ENCODE measurements at regions of chr2 and their contacts with region 1.

Region 1: GRCh38 chr2:187499941-187500532 is 52.0 kb upstream of the CALCRL start:
- H3K4me3 ChIP-seq: no peak overlapping the region
- H3K27ac ChIP-seq: no peak overlapping the region
- H3K4me1 ChIP-seq: peaks cover 14% of the 10 kb centered on the region
- CTCF ChIP-seq: peak; percentile 65; the same call in 1 of the 2 replicates

Region 2: GRCh38 chr2:187482796-187483195 is 17.2 kb before region 1 on chr2:
- CTCF ChIA-PET with region 1: interaction called, 10 read pairs
- POLR2A ChIA-PET with region 1: no interaction called
- H3K4me3 ChIP-seq: no peak overlapping the region
- H3K27ac ChIP-seq: no peak overlapping the region
- H3K4me1 ChIP-seq: no peaks in the 10 kb centered on the region
- CTCF ChIP-seq: no peak

Region 3: GRCh38 chr2:187567126-187567525 is 67.1 kb after region 1 on chr2:
- CTCF ChIA-PET with region 1: interaction called, 14 read pairs
- POLR2A ChIA-PET with region 1: no interaction called
- H3K4me3 ChIP-seq: no peak overlapping the region
- H3K27ac ChIP-seq: no peak overlapping the region
- H3K4me1 ChIP-seq: peaks cover 8% of the 10 kb centered on the region; the same call in 1 of the 2 replicates
- CTCF ChIP-seq: no peak

Region 4: DNA sequence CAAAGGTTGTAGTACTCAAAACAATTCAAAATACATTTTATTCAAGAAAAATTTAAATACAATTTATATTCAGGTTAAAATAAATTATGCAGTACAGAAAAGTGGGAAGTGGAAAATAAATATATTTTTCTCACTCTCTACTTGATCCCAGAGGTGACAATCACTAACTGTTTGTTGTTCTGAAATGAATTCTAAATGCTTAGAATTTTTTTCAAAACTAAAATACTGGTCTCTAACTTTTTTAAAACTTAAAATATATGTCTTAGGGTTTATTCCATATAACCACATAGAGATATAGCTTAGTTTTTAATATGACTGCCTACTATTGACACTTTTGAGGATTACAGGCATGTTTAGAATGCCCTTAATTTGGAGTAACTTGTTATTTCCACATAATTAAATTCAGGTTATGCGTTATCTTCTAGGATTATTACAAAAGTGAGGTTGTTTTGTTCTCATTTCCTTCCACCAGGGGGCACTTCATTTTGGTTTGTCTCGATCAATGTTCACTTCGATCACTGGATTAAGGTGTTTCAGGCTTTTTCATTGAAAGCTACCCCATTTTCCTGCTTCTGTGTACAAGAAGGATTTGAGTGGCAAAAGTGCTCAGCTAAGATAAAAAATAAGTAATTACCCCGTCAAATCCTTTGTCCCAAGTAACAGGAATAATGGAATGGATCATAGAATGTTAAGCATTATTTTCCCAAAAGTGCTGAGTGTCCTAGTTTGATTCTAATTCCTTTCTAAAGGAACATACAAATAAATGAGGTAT is 81.3 kb after region 1 on chr2:
- CTCF ChIA-PET with region 1: interaction called, 352 read pairs
- POLR2A ChIA-PET with region 1: no interaction called
- H3K4me3 ChIP-seq: no peak overlapping the region
- H3K27ac ChIP-seq: no peak overlapping the region
- H3K4me1 ChIP-seq: no peaks in the 10 kb centered on the region
- CTCF ChIP-seq: peak; percentile 48; the same call in 1 of the 2 replicates